Ascending aorta (tissue), 2 donors: ENCODE measurements at regions of chr2 and their contacts with region 1.

Region 1: GRCh38 chr2:186485871-186486650 is at the start of gene ZC3H15:
- DNase-seq: peak; percentile 90 to 98
- H3K4me3 ChIP-seq: peak within 1 kb of the TSS; percentile 67 to 87
- H3K27ac ChIP-seq: peak within 1 kb of the TSS; percentile 83 to 94
- H3K4me1 ChIP-seq: peaks cover 9 to 30% of the 10 kb centered on the region in 2 donors
- H3K27me3 ChIP-seq: no peaks in the 10 kb centered on the region
- CTCF ChIP-seq: no peak
- total RNA-seq, gene ZC3H15: 17.5 TPM

Region 2: DNA sequence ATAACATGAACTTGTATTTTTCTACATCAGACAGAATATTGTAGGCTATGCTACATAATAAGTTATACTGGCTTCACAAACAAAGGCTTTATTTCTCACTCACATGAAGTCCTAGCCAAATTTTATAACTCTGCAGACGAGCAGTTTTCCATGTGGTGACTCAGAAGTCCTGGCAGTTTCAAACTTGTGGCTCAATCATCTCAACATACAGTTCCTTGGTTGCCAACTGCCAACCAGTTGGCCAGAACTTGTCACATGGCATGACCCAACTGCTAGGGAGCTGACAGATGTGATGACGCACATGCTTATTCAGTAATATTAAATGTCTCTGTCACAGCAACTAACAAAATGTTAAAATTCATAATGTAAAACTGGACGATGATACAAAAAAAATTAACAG is 63.8 kb before region 1 on chr2:
- intact Hi-C with region 1: loop called (anchors 1 kb)
- DNase-seq: peak; percentile 37 to 83
- H3K4me3 ChIP-seq: no peak overlapping the region
- H3K27ac ChIP-seq: peak overlapping the region in 1 of 2 donors; percentile 39
- H3K4me1 ChIP-seq: peaks cover 0 to 7% of the 10 kb centered on the region in 2 donors
- H3K27me3 ChIP-seq: no peaks in the 10 kb centered on the region
- CTCF ChIP-seq: no peak

Region 3: GRCh38 chr2:186589612-186590349 is 103.7 kb after region 1 on chr2 and contains the start of gene ITGAV:
- intact Hi-C with region 1: loop called (anchors 2 kb)
- DNase-seq: peak; percentile 80 to 96
- H3K4me3 ChIP-seq: peak within 1 kb of the TSS; percentile 78 to 97
- H3K27ac ChIP-seq: peak within 1 kb of the TSS; percentile 94 to 99
- H3K4me1 ChIP-seq: peaks cover 0 to 23% of the 10 kb centered on the region in 2 donors
- H3K27me3 ChIP-seq: no peaks in the 10 kb centered on the region
- CTCF ChIP-seq: peak in 1 of 3 experiments; percentile 17
- total RNA-seq, gene ITGAV: 115 TPM

Region 4: DNA sequence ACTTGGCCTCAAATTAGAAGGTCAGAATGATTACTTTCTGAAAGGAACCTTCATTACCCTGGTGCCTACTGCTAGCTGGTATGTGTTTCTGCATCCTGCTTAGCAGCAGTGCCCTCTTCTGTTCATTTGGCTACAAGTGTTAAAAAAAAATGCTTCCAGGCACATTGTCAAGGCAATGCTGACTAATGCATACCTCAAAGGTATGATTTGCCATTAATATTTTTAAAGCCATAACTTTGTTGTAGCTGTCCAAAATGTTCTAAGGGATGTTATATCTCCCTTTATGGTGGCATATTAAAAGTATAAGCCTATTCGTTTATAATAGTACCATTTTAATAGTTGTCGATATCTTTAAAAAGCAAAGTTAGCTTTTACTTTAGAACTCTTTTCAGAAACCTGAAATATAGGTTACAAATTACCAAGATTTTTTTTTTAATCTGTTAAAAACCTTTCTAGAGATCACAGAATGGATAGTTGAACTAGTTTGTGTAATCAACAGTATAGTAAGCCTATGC is 155.8 kb after region 1 on chr2:
- intact Hi-C with region 1: loop called (anchors 5 kb)
- DNase-seq: no peak
- H3K4me3 ChIP-seq: no peak overlapping the region
- H3K27ac ChIP-seq: peak overlapping the region; percentile 8 to 24
- H3K4me1 ChIP-seq: no peaks in the 10 kb centered on the region
- H3K27me3 ChIP-seq: no peaks in the 10 kb centered on the region
- CTCF ChIP-seq: peak; percentile 63 to 81 (median 68)